ENCODE measurements at regions of chr19 and their contacts with region 1.

Region 1: DNA sequence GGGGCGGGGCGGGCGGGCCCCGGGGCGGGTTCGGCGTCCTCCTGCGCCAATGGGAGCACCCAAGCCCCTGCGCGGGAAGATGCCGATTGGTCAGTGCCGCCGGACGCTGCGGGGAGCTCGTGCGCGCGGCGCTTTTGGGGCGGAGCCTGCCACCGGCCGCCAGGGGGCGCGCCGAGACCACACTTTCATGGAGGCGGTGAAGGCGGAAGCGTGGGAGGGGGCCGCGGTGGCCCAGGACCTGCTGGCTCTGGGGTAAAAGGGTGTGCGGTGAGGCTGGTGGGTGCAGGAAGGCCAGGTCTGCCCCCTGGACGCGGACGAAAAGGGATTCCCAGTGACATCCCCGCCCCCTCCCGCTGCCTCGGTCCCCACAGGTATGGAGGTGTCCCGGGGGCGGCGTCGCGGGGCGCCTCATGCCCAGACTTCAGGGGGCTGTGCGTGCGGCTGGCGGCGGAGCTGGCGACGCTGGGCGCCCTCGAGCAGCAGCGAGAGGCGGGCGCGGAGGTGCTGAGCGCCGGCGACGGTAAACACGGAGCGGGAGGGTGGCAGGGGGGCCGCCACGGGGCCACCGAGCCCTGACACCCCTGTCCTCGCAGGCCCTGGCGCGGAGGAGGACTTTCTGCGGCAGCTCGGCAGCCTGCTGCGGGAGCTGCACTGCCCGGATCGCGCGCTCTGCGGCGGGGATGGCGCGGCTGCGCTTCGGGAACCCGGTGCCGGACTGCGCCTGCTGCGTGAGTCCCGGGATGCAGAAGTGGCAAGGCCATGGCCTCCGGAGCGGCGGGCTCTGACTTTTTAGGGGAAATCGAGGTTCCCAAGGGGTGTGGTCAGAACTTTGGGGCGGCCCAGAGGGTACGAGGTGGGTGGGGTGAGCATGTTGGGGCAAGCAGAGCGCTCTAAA is at the start of gene FAM98C:
- DNase-seq: peak; percentile 94 to 99
- H3K4me3 ChIP-seq: peak within 1 kb of the TSS; percentile 34 to 67 (median 49)
- H3K27ac ChIP-seq: no peak within 1 kb of the TSS
- H3K4me1 ChIP-seq: no peaks in the 10 kb centered on the region; a peak in 2 of 7 replicates
- H3K27me3 ChIP-seq: peaks cover 2 to 38% (median 33%) of the 10 kb centered on the region in 4 experiments
- CTCF ChIP-seq: peak; percentile 88 to 95 (median 91)
- EP300 ChIP-seq: no peak
- POLR2A ChIP-seq: 0 out of 3 replicates have a peak, but pooled peaks of 1 of the 2 experiments have one; percentile 40
- RAD21 ChIP-seq: peak; percentile 94 to 95
- total RNA-seq, gene FAM98C: 4.6 and 6.1 TPM in 2 replicates

Region 2: GRCh38 chr19:38298821-38299567 is 104.2 kb before region 1 on chr19:
- CTCF ChIA-PET with region 1: no interaction called
- POLR2A ChIA-PET with region 1: no interaction called
- DNase-seq: no peak
- H3K4me3 ChIP-seq: no peak overlapping the region
- H3K27ac ChIP-seq: no peak overlapping the region
- H3K4me1 ChIP-seq: peaks cover 0 to 8% (median 5%) of the 10 kb centered on the region in 4 experiments; a peak in 5 of 7 replicates
- H3K27me3 ChIP-seq: no peaks in the 10 kb centered on the region; a peak in 2 of 7 replicates
- CTCF ChIP-seq: no peak
- EP300 ChIP-seq: no peak
- POLR2A ChIP-seq: no peak
- RAD21 ChIP-seq: no peak

Region 3: DNA sequence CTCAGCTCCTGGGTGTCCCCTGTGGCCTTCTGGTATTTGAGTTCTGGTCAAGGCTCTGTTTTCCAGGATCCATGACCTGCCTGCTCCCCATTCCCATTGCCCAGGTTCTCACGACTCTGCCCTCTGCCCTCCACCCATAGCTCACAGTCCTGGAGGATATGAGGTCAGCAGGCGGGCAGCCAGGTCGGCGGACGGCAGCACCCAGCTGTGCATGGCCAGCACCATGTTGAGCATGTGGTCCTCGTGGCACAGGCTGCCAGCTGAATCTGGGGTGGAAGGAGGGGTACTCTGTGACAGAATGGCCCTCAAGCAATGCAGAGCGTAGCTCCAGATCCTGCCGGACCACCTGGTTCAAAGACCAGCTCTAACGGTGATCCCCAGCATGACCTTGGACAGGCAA is 17.7 kb after region 1 on chr19:
- CTCF ChIA-PET with region 1: interaction called, 32 read pairs
- POLR2A ChIA-PET with region 1: interaction called, 7 read pairs
- DNase-seq: no peak
- H3K4me3 ChIP-seq: no peak overlapping the region
- H3K27ac ChIP-seq: no peak overlapping the region
- H3K4me1 ChIP-seq: peaks cover 4 to 19% (median 14%) of the 10 kb centered on the region in 4 experiments; a peak in 6 of 7 replicates
- H3K27me3 ChIP-seq: peaks cover 0 to 9% (median 5%) of the 10 kb centered on the region in 4 experiments; a peak in 4 of 7 replicates
- CTCF ChIP-seq: no peak
- EP300 ChIP-seq: no peak
- POLR2A ChIP-seq: no peak
- RAD21 ChIP-seq: no peak

Region 4: GRCh38 chr19:38434549-38435051 is 31.4 kb after region 1 on chr19:
- CTCF ChIA-PET with region 1: interaction called, 35 read pairs
- POLR2A ChIA-PET with region 1: interaction called, 10 read pairs
- DNase-seq: peak in 1 of 2 experiments; percentile 89
- H3K4me3 ChIP-seq: peak overlapping the region; percentile 42 to 74 (median 64)
- H3K27ac ChIP-seq: peak overlapping the region; percentile 45; the same call in 1 of the 2 replicates
- H3K4me1 ChIP-seq: peaks cover 5 to 10% (median 7%) of the 10 kb centered on the region in 4 experiments; a peak in 6 of 7 replicates
- H3K27me3 ChIP-seq: no peaks in the 10 kb centered on the region
- CTCF ChIP-seq: no peak
- EP300 ChIP-seq: peak in 1 of 2 experiments; percentile 66; a peak in 1 of 3 replicates
- POLR2A ChIP-seq: peak in 1 of 2 experiments; percentile 54; a peak in 1 of 3 replicates
- RAD21 ChIP-seq: no peak

Region 5: GRCh38 chr19:38452428-38453366 is 49.5 kb after region 1 on chr19:
- CTCF ChIA-PET with region 1: interaction called, 22 read pairs
- POLR2A ChIA-PET with region 1: interaction called, 9 read pairs
- DNase-seq: peak; percentile 96 to 98
- H3K4me3 ChIP-seq: no peak overlapping the region
- H3K27ac ChIP-seq: no peak overlapping the region
- H3K4me1 ChIP-seq: peaks cover 0 to 5% (median 2%) of the 10 kb centered on the region in 4 experiments; a peak in 5 of 7 replicates
- H3K27me3 ChIP-seq: no peaks in the 10 kb centered on the region
- CTCF ChIP-seq: no peak
- EP300 ChIP-seq: no peak
- POLR2A ChIP-seq: no peak
- RAD21 ChIP-seq: no peak

Region 6: GRCh38 chr19:38527466-38528136 is 124.4 kb after region 1 on chr19:
- CTCF ChIA-PET with region 1: no interaction called
- POLR2A ChIA-PET with region 1: no interaction called
- DNase-seq: peak in 1 of 2 experiments; percentile 80
- H3K4me3 ChIP-seq: no peak overlapping the region
- H3K27ac ChIP-seq: no peak overlapping the region
- H3K4me1 ChIP-seq: no peaks in the 10 kb centered on the region
- H3K27me3 ChIP-seq: no peaks in the 10 kb centered on the region
- CTCF ChIP-seq: no peak
- EP300 ChIP-seq: no peak
- POLR2A ChIP-seq: no peak
- RAD21 ChIP-seq: no peak

Measured in H1 (cell line).